ENCODE measurements at regions of chr15 and their contacts with region 1.

Region 1: GRCh38 chr15:89740137-89740536 is 10.9 kb downstream of the MESP1 start:
- H3K4me3 ChIP-seq: no peak overlapping the region
- H3K27ac ChIP-seq: no peak overlapping the region
- H3K4me1 ChIP-seq: no peaks in the 10 kb centered on the region
- CTCF ChIP-seq: peak; percentile 86

Region 2: DNA sequence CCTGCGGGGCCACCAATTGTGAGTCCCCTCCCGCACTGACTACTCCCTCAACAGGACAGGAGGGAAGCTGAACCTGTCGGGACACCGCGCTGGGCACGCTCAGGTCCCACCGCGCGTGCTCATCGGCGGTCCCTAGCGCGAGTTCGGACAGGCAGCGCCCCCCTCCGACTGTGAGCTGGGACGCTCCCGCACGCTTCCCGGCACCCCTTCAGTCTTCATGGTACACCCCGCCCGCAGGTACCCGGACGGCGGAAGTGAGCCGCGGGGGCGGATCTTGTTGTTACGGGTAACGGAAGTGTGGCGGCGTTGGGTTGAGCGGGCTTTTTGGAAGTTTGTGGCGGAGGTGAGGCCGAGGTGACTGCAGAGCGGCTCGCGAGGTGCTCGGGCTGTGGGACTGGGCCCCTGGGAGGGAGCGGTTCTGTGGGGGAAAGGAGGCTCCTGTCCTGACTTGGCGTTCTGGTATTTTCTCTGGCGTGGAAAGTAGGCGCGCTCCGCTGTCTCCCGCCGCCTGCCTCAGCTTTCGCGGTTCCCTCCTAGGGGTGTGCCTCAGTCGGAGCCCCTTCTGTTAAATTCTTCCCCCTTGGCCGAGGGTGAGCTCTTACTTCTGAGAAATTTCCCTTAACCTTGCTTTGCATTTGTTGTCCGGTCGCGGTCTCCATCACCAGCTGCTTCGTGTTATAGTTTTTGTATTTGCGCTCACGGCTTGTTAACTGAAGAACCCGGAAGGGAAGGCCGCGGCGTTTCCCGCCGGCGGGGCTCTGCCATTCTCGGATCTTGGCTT is 496.3 kb before region 1 on chr15 and contains the start of gene FANCI:
- CTCF ChIA-PET with region 1: no interaction called
- POLR2A ChIA-PET with region 1: no interaction called
- H3K4me3 ChIP-seq: peak within 1 kb of the TSS; percentile 71
- H3K27ac ChIP-seq: peak within 1 kb of the TSS; percentile 68
- H3K4me1 ChIP-seq: peaks cover 8% of the 10 kb centered on the region
- CTCF ChIP-seq: peak; percentile 99

Region 3: DNA sequence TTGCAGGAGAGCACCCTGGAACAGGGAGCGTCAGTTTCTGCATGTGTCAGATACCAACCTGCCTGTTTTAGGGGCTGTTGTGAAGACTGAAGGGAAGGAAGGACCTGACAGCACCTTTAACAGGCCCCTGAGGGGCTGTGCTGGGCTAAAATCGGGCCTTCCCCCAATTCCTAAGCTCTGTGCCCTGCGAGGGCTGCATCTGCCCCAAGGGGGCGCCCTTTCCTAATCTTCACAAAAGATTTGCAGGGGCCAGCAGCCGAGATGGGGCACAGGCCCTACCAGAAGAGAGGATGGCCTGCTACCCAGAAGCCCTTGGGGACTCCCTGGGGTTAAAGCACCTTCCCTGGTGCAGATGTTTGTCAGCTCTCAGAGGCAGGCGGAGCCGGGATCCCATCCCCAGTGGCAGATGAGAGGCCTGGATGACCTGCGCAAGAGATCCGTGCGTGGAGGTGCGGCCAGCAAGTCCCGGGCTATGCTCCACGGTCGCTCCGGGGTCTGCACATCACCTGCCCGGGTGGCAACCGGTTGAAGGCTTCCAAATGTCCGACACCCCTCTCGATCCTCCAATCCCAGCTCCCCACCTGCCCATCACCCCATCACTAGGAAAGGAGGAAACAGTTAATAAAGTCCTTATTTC is 297.3 kb before region 1 on chr15:
- CTCF ChIA-PET with region 1: no interaction called
- POLR2A ChIA-PET with region 1: no interaction called
- H3K4me3 ChIP-seq: no peak overlapping the region
- H3K27ac ChIP-seq: no peak overlapping the region
- H3K4me1 ChIP-seq: no peaks in the 10 kb centered on the region
- CTCF ChIP-seq: peak; percentile 61; the same call in 1 of the 2 replicates

Region 4: GRCh38 chr15:89704411-89704810 is 35.7 kb before region 1 on chr15:
- CTCF ChIA-PET with region 1: interaction called, 13 read pairs
- POLR2A ChIA-PET with region 1: no interaction called
- H3K4me3 ChIP-seq: no peak overlapping the region
- H3K27ac ChIP-seq: no peak overlapping the region
- H3K4me1 ChIP-seq: no peaks in the 10 kb centered on the region
- CTCF ChIP-seq: no peak

Region 5: DNA sequence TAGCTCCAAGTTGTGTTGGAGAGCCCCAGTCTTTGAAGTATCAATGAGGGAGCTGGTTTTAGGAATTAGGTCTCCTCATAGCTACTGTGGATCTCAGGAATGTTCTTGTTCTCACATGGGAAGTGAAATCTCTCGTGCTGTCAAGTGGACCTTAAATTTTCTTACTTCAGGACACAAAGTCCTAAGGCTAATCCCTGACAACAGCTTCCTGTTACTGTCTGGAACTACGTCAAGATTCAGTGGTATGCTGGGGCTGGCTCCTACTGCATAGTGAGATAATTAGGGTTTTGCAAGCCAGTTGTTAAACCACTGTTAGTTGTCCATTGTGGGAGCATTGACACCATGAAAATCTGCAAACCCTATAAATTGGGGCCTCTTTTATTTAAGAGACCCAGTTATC is 11.9 kb before region 1 on chr15:
- CTCF ChIA-PET with region 1: interaction called, 12 read pairs
- POLR2A ChIA-PET with region 1: no interaction called
- H3K4me3 ChIP-seq: no peak overlapping the region
- H3K27ac ChIP-seq: no peak overlapping the region
- H3K4me1 ChIP-seq: no peaks in the 10 kb centered on the region
- CTCF ChIP-seq: no peak

Region 6: DNA sequence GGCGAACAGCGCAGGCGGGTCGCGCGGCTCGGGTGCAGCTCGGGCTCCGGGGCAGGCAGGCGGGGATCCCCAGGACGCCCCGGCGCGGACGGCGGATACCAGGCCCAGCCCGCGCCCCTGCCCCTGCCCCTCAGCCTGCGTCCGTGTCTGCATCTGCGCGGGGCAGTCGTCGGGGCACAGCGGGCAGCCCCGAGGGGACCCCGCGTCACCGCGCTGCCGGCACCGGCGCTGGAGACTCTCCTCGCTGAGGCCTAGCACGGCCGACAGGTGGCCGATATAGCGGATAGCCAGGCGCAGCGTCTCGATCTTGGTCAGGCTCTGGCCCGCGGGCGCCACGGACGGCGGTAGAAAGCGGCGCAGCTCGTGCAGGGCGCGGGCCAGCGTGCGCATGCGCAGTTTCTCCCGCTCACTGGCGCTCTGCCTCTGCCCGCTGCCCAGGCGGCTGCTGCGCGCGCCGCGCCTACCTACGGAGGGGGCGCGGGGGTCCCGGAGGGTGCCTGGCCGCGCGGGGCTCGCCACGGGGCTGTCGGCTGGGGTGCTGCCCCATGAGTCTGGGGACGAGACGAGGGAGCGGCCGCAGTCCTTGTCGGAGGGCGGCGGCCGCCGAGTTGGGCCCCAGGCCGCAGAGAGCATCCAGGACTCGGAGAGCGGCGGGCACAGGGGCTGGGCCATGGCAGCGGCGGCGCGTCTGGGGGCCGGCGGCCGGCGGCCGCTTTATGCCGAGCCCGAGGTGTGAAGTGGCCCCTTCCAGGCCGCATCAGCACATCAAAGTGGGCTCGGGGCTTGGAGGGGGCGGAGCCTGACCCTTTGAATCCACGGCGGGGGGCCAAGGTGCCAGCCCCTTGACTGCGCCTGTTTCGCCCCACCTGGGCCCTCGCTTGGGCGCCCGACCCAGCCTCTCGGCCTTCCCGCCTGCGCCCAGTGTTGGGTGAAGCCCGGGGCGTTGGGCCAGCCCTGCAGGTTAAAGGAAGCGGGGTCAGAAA is 10.7 kb after region 1 on chr15 and contains the start of gene MESP1:
- CTCF ChIA-PET with region 1: interaction called, 16 read pairs
- POLR2A ChIA-PET with region 1: interaction called, 8 read pairs
- H3K4me3 ChIP-seq: peak within 1 kb of the TSS; percentile 54
- H3K27ac ChIP-seq: peak within 1 kb of the TSS; percentile 77; the same call in 1 of the 2 replicates
- H3K4me1 ChIP-seq: peaks cover 8% of the 10 kb centered on the region; the same call in 1 of the 2 replicates
- CTCF ChIP-seq: peak; percentile 93

Region 7: DNA sequence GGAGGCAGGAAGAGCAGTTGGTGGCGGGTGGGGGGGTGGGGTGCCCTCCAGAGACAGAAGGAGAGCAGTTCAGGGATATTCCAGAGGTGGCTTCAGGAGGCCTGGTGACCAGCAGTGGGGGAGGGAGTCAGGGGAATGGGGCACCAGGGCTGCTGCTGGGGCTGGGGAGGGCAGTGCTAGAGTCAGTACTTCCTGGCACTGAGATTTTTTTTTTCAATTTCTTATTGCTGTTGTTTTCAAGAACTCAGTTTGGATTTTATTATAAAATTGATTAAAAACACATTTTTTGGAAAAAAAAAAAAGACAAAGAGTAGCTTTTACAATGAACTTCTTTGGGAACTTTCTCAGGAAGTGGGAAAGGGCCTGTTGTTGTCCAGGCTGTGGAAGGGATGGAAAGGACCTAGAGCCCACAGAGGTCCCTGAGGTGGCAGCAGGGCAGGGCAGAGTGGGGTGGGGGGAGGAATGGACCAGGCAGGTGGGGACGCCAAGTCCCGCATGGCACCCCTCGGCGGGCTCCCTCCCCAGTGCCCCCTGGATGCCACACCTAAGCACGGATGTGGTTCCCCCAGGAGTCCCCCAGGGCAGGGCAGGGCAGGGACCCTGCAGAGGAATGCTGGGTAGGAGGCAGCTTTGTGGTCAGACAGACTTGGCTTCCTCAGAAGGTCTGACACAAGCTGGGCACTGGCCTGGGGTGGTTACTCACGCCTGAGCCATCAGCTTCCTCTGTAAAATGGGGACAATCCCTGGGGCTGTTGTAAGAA is 83.0 kb after region 1 on chr15:
- CTCF ChIA-PET with region 1: no interaction called
- POLR2A ChIA-PET with region 1: no interaction called
- H3K4me3 ChIP-seq: no peak overlapping the region
- H3K27ac ChIP-seq: no peak overlapping the region
- H3K4me1 ChIP-seq: 0 out of 2 replicates have a peak, but pooled peaks cover 2% of the 10 kb centered on the region
- CTCF ChIP-seq: no peak

Region 8: DNA sequence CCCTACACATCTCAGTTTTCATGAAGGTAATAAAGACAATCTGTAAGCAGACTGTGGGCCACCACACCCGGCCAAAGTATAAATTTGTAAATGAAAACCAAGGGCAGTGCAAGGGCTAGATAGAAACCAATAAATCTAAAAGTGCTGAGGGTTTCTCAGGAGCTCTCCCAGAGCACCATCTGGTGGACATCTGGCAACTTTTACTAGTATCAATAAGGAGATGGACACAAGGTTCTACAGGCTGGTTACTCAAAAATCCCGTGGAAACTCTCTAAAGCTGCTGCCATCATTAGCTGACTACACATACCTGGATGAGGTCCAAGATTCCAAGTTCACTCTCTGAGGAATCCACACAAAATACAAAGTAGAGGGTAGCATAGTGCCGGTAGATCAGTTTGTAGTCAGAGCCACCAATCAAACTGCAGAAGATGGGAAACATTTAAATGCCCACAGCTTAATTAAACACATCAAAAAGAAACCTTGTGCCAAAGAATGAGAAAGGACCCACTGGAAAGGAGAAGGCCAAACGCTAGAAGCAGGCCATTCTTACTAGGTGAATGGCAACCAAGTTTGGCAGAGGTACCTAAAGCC is 148.2 kb after region 1 on chr15:
- CTCF ChIA-PET with region 1: interaction called, 20 read pairs
- POLR2A ChIA-PET with region 1: interaction called, 3 read pairs
- H3K4me3 ChIP-seq: no peak overlapping the region
- H3K27ac ChIP-seq: no peak overlapping the region
- H3K4me1 ChIP-seq: peaks cover 3% of the 10 kb centered on the region
- CTCF ChIP-seq: peak; percentile 26; the same call in 1 of the 2 replicates

Measured in HEK293 (cell line).